PC-9 (cell line): ENCODE measurements at regions of chr12 and their contacts with region 1.

Region 1: DNA sequence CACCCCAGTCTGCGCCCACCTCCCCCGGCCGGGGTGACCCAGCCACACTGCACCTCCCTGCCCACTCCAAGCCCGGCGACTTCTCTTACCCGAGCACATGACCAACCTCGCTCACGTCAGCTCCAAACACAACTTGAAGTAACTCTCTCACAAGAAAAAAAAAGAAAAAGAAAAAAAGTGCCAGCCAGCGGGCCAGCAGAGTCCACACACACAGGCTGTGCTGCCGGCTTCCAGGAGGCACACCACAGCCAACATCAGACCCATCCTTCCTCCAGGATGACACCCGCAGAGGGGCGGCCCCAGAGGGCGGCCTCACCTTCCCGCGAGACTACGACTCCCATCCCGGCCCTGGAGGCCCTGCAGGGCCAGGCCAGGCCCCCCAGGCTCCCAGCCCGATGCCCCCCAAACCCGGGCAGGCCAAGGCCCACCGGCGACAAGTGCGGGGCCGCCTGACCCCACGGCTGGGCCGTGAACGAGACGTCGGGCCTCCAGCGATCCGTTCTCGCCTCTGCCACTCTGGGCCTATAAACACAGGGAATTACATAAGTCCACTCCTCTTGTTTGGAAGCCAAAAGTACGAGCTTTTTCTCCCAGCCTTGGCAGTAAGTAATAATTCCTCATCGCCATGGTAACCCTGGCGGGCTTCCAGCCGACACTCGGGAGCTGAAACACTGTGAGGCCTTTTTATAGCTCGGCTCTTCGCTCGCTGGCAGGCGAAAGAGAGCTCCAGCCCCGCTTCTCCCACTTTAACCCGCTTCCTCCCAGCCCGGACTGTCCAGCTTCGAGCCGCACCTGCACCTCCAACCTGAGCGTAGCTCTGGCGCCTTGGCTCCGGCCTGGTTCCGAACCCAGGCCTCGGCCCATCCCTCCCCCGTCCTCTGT is 49.1 kb downstream of the NCOR2 start:
- DNase-seq: peak; percentile 95
- H3K4me3 ChIP-seq: peak overlapping the region; percentile 59
- H3K27ac ChIP-seq: peak overlapping the region; percentile 91
- H3K4me1 ChIP-seq: peaks cover 54% of the 10 kb centered on the region
- H3K27me3 ChIP-seq: no peaks in the 10 kb centered on the region
- CTCF ChIP-seq: no peak

Region 2: GRCh38 chr12:123972457-123973401 is 545.6 kb before region 1 on chr12 and contains the starts of genes CCDC92 and ZNF664:
- CTCF ChIA-PET with region 1: no interaction called
- POLR2A ChIA-PET with region 1: no interaction called
- intact Hi-C with region 1: loop called (anchors 10 kb)
- DNase-seq: peak; percentile 69 to 95
- H3K4me3 ChIP-seq: peak within 1 kb of the TSS; percentile 85
- H3K27ac ChIP-seq: no peak within 1 kb of the TSS
- H3K4me1 ChIP-seq: peaks cover 20% of the 10 kb centered on the region
- H3K27me3 ChIP-seq: no peaks in the 10 kb centered on the region
- CTCF ChIP-seq: no peak
- total RNA-seq, gene CCDC92: 24.8 and 28.0 TPM in 2 replicates
- total RNA-seq, gene ZNF664: 66.3 and 87.6 TPM in 2 replicates

Region 3: GRCh38 chr12:124480469-124481256 is 37.6 kb before region 1 on chr12:
- CTCF ChIA-PET with region 1: no interaction called
- POLR2A ChIA-PET with region 1: no interaction called
- intact Hi-C with region 1: loop called (anchors 1 kb)
- DNase-seq: peak; percentile 91 to 98
- H3K4me3 ChIP-seq: no peak overlapping the region; the same call in 1 of the 2 replicates
- H3K27ac ChIP-seq: peak overlapping the region; percentile 59
- H3K4me1 ChIP-seq: peaks cover 28% of the 10 kb centered on the region
- H3K27me3 ChIP-seq: no peaks in the 10 kb centered on the region
- CTCF ChIP-seq: no peak

Region 4: GRCh38 chr12:124538194-124539082 is 20.1 kb after region 1 on chr12:
- CTCF ChIA-PET with region 1: no interaction called
- POLR2A ChIA-PET with region 1: no interaction called
- intact Hi-C with region 1: loop called (anchors 1 kb)
- DNase-seq: no peak
- H3K4me3 ChIP-seq: no peak overlapping the region
- H3K27ac ChIP-seq: no peak overlapping the region
- H3K4me1 ChIP-seq: peaks cover 41% of the 10 kb centered on the region
- H3K27me3 ChIP-seq: no peaks in the 10 kb centered on the region
- CTCF ChIP-seq: no peak

Region 5: DNA sequence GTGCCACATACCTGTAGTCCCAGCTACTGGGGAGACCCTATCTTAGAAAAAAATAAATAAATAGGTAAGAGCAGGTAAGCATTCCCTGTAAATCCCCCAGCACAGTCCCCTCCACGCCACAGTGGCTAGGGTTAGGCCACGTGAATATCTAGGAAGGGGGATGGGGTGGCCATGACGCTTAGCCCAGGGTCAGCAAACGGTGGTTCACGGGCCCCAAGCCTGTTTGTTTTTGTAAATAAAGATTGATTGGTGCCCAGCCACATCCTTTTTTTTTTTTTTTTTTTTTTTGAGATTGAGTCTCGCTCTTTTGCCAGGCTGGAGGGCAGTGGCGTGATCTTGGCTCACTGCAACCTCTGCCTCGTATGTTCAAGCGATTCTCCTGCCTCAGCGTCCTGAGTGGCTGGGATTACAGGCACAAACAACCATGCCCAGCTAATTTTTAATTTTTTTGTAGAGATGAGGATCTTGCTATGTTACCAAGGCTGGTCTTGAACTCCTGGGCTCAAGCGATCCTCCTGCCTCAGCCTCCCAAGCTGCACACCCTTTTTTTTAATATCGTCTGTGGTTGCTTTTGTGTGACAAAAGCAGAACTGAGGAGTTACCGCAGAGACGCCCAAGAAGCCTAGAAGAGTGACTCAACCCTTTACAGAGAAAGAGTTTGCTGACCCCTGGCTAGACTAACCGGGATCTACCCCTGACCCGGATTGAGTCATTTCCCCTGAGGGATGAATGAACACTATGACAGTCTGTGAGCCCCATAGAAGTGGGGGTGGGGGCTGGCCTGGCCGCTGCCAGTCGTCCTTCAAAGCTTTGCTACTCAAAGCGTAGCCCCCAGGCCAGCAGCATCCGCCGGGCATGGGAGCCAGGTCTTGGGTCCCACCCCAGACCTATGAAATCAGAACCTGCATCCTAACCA is 162.8 kb after region 1 on chr12:
- CTCF ChIA-PET with region 1: no interaction called
- POLR2A ChIA-PET with region 1: no interaction called
- intact Hi-C with region 1: loop called (anchors 10 kb)
- DNase-seq: peak; percentile 72 to 96
- H3K4me3 ChIP-seq: no peak overlapping the region; the same call in 1 of the 2 replicates
- H3K27ac ChIP-seq: peak overlapping the region; percentile 95
- H3K4me1 ChIP-seq: peaks cover 88% of the 10 kb centered on the region
- H3K27me3 ChIP-seq: no peaks in the 10 kb centered on the region
- CTCF ChIP-seq: peak; percentile 38

Region 6: DNA sequence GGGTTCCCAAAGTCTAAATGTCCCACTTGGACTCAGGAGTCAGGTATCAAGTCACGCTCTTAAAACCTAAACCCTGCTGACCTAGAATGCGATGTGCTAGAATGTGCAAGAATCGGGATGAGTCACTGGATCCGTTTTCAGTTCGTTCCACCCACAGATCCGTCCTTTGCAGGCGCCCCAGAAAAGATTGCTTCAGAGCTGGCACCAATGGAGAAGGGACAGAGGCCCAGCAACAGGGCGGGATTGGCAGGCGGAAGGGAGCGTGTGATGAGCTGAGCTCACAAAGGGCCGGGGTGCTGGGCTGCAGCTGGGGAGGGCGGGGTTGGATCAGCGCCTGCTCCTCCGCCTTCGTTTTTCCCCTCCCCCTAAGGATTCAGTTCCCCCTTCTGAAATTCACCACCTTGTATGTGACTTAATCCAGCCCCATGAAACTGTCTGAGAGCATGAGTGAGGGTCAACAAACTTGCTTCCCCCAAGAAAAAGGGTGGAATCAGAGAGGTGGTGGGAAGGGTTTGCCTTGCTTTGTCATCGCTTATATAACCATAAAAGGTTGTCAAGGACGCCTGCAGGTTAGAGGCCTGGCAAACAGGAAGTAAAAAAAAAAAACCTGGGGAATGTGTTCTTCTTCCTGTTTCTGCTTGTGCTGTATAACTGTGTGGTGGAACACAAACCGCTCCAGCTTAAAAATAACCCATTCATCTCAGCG is 399.0 kb after region 1 on chr12:
- CTCF ChIA-PET with region 1: no interaction called
- POLR2A ChIA-PET with region 1: no interaction called
- intact Hi-C with region 1: loop called (anchors 10 kb)
- DNase-seq: peak; percentile 95 to 99
- H3K4me3 ChIP-seq: peak overlapping the region; percentile 100
- H3K27ac ChIP-seq: peak overlapping the region; percentile 100
- H3K4me1 ChIP-seq: peaks cover 54% of the 10 kb centered on the region
- H3K27me3 ChIP-seq: no peaks in the 10 kb centered on the region
- CTCF ChIP-seq: 0 out of 2 replicates have a peak, but pooled peaks have one; percentile 5